Heart right ventricle (tissue), 16 donors: ENCODE measurements at regions of chr16 and their contacts with region 1.

Region 1: DNA sequence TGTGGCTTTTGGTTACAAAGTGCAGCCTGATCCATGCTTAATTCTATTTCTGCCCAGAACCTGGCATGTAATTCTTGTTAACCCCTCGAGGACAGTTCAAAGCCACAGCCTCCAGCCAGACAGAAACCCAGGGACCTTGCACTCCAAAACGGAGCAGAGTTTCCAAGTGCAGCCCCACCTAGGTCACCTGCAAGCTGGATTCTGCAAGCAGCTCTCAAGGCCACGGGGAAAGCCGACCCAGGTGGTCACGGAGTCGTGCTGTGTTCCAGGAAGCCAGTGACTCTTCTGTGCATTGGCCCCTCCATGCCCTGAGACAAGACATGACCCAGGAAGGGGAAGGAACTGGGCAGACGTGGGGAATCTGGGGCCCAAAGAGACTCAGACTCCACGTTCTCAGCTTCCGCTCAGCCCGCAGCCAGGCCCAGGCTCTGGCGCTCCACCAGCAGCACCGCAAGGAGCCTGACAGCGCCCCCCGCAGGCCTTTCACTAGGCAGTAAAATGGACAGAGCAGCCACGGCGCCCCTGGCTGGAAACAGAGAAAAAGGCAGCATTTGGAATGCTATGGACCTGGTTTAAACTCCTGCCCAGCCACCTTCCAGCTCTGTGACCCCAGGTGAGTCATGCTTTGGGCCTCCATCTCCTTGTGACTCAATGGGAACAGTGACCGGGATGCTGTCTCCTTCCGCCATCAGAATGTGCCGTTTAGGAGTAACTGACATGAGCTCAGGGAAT is 27.3 kb upstream of the GSG1L start:
- DNase-seq: no peak
- ATAC-seq: no peak
- H3K4me3 ChIP-seq: no peak overlapping the region
- H3K27ac ChIP-seq: no peak overlapping the region
- H3K4me1 ChIP-seq: no peaks in the 10 kb centered on the region
- H3K27me3 ChIP-seq: no peaks in the 10 kb centered on the region
- CTCF ChIP-seq: peak in 1 of 9 donors; percentile 8

Region 2: GRCh38 chr16:27867122-27868110 is 223.4 kb before region 1 on chr16:
- intact Hi-C with region 1: no loop called
- DNase-seq: peak; percentile 28 to 51
- ATAC-seq: peak; percentile 49 to 86 (median 69)
- H3K4me3 ChIP-seq: no peak overlapping the region
- H3K27ac ChIP-seq: no peak overlapping the region
- H3K4me1 ChIP-seq: no peaks in the 10 kb centered on the region
- H3K27me3 ChIP-seq: peaks cover 0 to 11% (median 0%) of the 10 kb centered on the region in 7 donors
- CTCF ChIP-seq: peak in 7 of 9 donors; percentile 44 to 54 (median 51)

Region 3: GRCh38 chr16:27906883-27907282 is 183.9 kb before region 1 on chr16:
- intact Hi-C with region 1: no loop called
- DNase-seq: no peak
- ATAC-seq: no peak
- H3K4me3 ChIP-seq: no peak overlapping the region
- H3K27ac ChIP-seq: no peak overlapping the region
- H3K4me1 ChIP-seq: no peaks in the 10 kb centered on the region
- H3K27me3 ChIP-seq: peaks cover 0 to 30% (median 3%) of the 10 kb centered on the region in 7 donors
- CTCF ChIP-seq: no peak

Region 4: DNA sequence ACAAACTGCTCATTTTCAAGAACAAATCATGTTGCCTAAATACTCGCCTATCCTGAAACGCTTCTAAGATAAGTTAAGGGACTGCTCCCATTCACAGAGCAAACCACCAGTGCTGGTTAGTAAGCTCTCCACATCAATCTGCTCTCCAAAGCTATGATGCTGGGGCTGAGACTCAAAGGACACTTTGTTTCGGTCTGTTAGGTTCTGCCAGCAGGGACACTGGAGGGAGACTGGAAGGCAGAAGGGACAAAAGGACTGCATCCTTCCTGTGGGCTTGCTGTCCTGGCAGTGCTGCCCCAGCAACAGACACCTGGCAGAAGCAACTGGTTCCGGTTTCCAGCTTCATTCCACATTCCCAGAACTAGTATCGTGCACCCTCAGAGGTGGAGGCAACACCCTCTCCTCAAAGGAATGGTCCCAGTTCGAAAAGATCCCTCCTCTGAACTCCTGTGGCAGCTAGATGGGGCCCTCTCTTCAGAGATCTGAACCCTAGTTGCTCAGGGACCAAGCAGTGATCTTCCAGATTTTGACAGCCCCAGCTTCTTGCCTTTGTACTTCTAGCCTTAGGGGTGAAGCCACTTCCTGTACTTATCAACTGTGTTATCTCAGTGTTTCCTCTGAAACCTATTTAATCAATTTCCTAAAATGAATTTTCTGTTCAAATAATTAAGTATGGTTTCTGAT is 46.1 kb after region 1 on chr16:
- intact Hi-C with region 1: loop called in 1 of 10 experiments (anchors 5 kb)
- DNase-seq: no peak
- ATAC-seq: peak in 2 of 8 donors; percentile 17 to 25
- H3K4me3 ChIP-seq: no peak overlapping the region
- H3K27ac ChIP-seq: peak overlapping the region in 1 of 10 donors; percentile 60
- H3K4me1 ChIP-seq: peaks cover 0 to 43% (median 0%) of the 10 kb centered on the region in 9 donors
- H3K27me3 ChIP-seq: no peaks in the 10 kb centered on the region
- CTCF ChIP-seq: peak in 1 of 9 donors; percentile 28